ENCODE measurements at regions of chr3 and their contacts with region 1.

Region 1: GRCh38 chr3:196609343-196609775 is 30.1 kb upstream of the NRROS start:
- DNase-seq: peak; percentile 88 to 89
- ATAC-seq: peak; percentile 84 to 93 (median 90)
- H3K4me3 ChIP-seq: peak overlapping the region in 1 of 10 donors; percentile 8
- H3K27ac ChIP-seq: peak overlapping the region in 8 of 10 donors; percentile 3 to 91 (median 52)
- H3K4me1 ChIP-seq: peaks cover 3 to 48% (median 29%) of the 10 kb centered on the region in 9 donors
- H3K27me3 ChIP-seq: peaks cover 0 to 10% (median 0%) of the 10 kb centered on the region in 7 donors
- CTCF ChIP-seq: peak; percentile 71 to 93 (median 85)

Region 2: DNA sequence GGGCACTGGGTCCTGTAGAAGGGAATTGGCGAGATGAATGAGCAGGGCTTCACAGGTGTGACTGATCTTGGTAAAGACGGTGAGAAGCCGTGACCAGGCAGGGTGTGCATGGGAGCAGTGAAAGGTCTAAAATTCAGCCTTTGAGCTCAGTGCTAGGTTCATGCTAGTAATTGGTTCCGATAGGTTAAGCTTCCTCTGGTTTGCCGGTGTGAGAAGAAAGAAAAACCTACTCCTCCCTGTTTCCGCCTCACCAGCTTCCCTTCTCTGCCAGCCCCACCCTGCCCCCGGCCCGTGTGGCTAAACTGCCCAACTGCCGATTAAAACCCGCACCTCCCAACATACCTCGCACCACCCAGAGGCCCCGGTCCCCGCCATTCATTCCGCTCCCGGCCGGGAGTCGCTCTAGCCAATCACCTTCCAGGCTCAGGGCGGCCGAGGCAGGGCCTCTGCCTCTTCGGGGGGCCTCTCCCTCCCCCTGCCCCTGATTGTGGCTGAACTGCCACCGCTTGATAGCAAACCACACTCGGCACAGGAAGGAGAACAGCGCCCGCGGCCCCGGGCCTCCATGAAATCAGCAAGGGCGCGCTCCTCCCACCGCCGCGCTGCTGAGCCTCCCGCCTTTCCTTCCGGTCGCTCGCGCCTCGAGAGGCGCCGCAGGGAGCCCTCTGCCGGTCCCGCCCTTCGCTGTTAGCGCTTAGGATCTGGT is 22.8 kb after region 1 on chr3:
- intact Hi-C with region 1: loop called in 1 of 10 experiments (anchors 1 kb)
- DNase-seq: peak; percentile 86 to 87
- ATAC-seq: peak; percentile 91 to 97 (median 94)
- H3K4me3 ChIP-seq: peak overlapping the region; percentile 30 to 78 (median 66)
- H3K27ac ChIP-seq: peak overlapping the region; percentile 62 to 97 (median 91)
- H3K4me1 ChIP-seq: peaks cover 0 to 58% (median 17%) of the 10 kb centered on the region in 9 donors
- H3K27me3 ChIP-seq: peaks cover 0 to 8% (median 0%) of the 10 kb centered on the region in 7 donors
- CTCF ChIP-seq: peak in 7 of 9 donors; percentile 31 to 64 (median 51)

Region 3: GRCh38 chr3:196650740-196651311 is 41.5 kb after region 1 on chr3:
- intact Hi-C with region 1: loop called in 1 of 10 experiments (anchors 5 kb)
- DNase-seq: peak; percentile 42 to 58
- ATAC-seq: peak; percentile 75 to 96 (median 90)
- H3K4me3 ChIP-seq: no peak overlapping the region
- H3K27ac ChIP-seq: peak overlapping the region in 6 of 10 donors; percentile 34 to 82 (median 56)
- H3K4me1 ChIP-seq: peaks cover 2 to 64% (median 33%) of the 10 kb centered on the region in 9 donors
- H3K27me3 ChIP-seq: peaks cover 0 to 6% (median 0%) of the 10 kb centered on the region in 7 donors
- CTCF ChIP-seq: no peak

Region 4: GRCh38 chr3:196670339-196670738 is 61.0 kb after region 1 on chr3:
- intact Hi-C with region 1: loop called in 1 of 10 experiments (anchors 5 kb)
- DNase-seq: no peak
- ATAC-seq: peak; percentile 55 to 93 (median 76)
- H3K4me3 ChIP-seq: peak overlapping the region in 1 of 10 donors; percentile 12
- H3K27ac ChIP-seq: peak overlapping the region in 8 of 10 donors; percentile 15 to 67 (median 48)
- H3K4me1 ChIP-seq: peaks cover 0 to 34% (median 8%) of the 10 kb centered on the region in 9 donors
- H3K27me3 ChIP-seq: peaks cover 0 to 16% (median 0%) of the 10 kb centered on the region in 7 donors
- CTCF ChIP-seq: no peak

Region 5: GRCh38 chr3:196684548-196685407 is 75.4 kb after region 1 on chr3:
- intact Hi-C with region 1: loop called (anchors 1 to 5 kb)
- DNase-seq: peak; percentile 19 to 74
- ATAC-seq: peak in 7 of 8 donors; percentile 71 to 90 (median 82)
- H3K4me3 ChIP-seq: peak overlapping the region in 2 of 10 donors; percentile 3 to 17
- H3K27ac ChIP-seq: peak overlapping the region in 4 of 10 donors; percentile 24 to 73 (median 34)
- H3K4me1 ChIP-seq: peaks cover 0 to 48% (median 10%) of the 10 kb centered on the region in 9 donors
- H3K27me3 ChIP-seq: peaks cover 0 to 2% (median 0%) of the 10 kb centered on the region in 7 donors
- CTCF ChIP-seq: peak; percentile 81 to 91 (median 89)

Region 6: DNA sequence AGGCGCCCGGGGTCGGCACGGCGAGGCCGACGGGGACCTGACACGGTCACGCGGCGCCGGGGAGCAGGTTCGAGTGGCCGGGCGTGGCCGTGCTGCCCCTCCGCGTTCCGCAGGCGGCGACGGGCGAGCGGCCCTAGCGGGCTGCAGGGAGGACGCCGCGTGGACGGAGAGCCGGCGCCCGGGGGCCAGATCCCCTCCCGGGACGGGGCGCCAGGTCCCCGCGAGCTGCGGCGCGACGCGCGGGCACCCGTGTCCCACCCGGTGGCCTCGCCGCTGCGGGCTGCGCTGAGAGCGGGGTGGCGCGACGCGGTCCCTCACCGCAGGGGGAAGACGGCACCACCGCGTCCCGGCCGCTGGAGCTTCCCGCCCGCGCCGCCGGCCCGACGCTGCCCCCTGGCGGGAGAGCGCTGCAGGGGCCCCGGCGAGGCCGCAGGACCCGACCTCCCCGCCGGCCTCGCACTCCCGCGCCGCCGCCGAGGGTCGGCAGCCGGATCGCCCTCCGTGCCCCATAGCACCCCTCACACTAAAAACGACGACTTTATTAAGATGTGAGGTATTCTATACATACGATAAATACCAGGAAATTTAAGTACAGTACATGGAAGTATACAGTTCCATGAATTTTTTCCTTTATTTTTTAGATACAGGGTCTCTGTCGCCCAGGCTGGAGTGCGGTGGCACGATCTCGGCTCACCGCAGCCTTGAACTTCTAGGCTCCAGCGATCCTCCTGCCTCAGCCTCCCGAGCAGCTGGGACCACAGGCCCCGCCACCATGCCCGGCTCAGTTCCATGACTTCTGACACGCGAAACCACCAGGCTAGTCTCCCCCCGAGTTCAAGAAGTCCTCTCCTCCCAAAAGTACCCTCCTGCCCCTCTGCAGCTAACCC is 360.5 kb after region 1 on chr3:
- intact Hi-C with region 1: loop called in 2 of 10 experiments (anchors 5 to 10 kb)
- DNase-seq: peak; percentile 27 to 74
- ATAC-seq: peak in 7 of 8 donors; percentile 64 to 89 (median 82)
- H3K4me3 ChIP-seq: peak overlapping the region; percentile 77 to 99 (median 87)
- H3K27ac ChIP-seq: peak overlapping the region in 8 of 10 donors; percentile 77 to 90 (median 86)
- H3K4me1 ChIP-seq: peaks cover 5 to 18% (median 11%) of the 10 kb centered on the region in 9 donors
- H3K27me3 ChIP-seq: no peaks in the 10 kb centered on the region
- CTCF ChIP-seq: peak; percentile 49 to 98 (median 85)